ENCODE measurements at regions of chr4 and their contacts with region 1.

Region 1: DNA sequence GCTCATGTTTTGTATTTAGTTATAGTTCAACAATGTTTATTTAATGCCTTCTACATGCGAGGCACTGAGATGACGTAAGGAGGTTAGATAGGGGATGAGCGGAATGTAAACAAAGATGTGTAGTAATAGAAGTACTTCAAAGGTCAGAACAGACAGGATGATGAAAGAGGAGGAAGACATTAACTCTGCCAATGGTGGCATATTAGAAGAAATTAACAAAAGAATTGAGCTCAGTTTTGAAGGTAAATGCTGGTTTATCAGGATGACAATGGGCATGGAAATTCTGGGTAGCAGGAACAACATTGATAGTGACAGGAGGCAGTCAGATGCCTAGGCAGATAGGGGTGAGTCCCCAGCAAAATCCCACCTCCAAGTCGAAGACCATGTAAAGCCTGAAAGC is 62.3 kb upstream of the PGRMC2 start:
- DNase-seq: peak; percentile 91
- H3K4me3 ChIP-seq: no peak overlapping the region
- H3K27ac ChIP-seq: peak overlapping the region; percentile 40
- H3K27me3 ChIP-seq: no peaks in the 10 kb centered on the region
- CTCF ChIP-seq: no peak

Region 2: DNA sequence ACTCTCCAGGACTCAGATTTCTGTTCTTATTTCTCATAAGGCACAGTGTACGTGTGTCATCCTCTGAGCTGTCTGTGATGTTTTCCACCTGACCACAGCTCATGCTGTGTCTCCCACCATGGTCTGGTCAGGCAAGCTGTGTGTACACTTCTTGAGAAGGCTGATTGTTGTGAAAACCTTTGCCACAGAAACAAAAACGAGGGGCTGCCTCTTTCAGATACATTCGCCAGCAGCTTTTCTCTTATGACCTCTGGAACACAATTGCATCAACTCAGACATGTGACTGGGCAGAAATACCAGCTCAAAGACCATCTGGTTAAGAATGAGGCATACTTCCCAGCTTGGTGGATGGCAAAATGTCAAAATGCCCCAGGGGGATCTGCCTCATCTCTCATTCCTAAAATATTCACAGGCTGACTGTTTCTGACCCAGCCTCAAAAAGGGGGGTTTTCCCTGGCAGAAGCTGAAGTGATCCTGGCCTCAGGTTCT is 108.5 kb before region 1 on chr4:
- CTCF ChIA-PET with region 1: no interaction called
- POLR2A ChIA-PET with region 1: interaction called, 11 read pairs
- DNase-seq: peak; percentile 98
- H3K4me3 ChIP-seq: no peak overlapping the region
- H3K27ac ChIP-seq: peak overlapping the region; percentile 95
- H3K27me3 ChIP-seq: no peaks in the 10 kb centered on the region
- CTCF ChIP-seq: no peak

Region 3: DNA sequence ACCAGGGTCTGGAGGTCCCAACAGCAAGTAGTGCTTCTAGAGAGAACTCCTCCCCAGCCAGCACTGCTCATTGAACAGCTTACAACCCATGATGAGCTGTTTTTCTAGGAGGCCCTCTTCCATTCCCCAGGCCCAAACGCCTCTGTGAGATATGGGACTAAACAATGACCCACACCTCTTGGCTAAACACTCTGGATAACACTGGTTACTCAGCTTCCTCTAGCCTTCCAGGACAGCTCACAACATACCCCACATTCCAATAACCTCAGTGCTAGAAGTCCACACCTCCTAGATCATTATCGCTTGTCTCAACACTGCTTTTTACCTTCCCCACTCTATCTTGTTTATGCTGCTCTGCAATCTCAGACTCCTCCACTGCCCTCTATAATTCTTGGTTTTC is 26.9 kb before region 1 on chr4:
- CTCF ChIA-PET with region 1: no interaction called
- POLR2A ChIA-PET with region 1: interaction called, 10 read pairs
- DNase-seq: no peak
- H3K4me3 ChIP-seq: no peak overlapping the region
- H3K27ac ChIP-seq: peak overlapping the region; percentile 82
- H3K27me3 ChIP-seq: no peaks in the 10 kb centered on the region
- CTCF ChIP-seq: no peak

Region 4: DNA sequence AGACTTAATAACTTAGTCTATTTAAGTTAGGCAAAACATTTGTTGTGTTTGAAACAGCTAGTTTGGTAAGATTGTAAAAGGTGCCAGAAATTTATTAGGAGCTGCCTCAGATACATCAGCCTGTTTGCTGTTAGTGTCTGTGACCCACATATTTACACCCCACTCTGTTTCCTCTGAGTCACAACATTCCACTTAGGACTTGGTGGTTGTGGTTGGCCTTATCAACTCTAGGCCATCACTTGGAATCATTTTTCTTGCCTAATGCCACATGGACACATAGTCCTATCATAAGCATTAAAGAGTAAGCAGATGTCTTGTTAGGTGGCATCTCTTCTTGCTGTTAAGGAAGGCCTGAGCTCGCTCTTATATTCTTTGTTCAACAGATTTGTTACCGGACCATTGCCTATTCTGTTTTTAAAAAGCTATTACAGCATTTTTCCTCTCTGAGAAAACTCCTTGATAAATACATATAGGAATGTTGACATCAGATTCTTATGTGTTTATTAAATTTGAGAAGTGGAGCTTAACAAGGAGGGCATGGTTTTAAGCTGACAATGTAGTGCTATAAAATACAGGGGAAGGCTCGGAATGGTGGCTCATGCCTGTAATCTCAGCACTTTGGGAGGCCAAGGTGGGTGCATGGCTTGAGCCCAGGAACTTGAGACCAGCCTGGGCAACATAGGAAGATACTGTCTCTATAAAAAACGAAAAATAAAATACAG is 11.1 kb before region 1 on chr4:
- CTCF ChIA-PET with region 1: no interaction called
- POLR2A ChIA-PET with region 1: interaction called, 12 read pairs
- DNase-seq: peak; percentile 53
- H3K4me3 ChIP-seq: no peak overlapping the region
- H3K27ac ChIP-seq: peak overlapping the region; percentile 47
- H3K27me3 ChIP-seq: no peaks in the 10 kb centered on the region
- CTCF ChIP-seq: no peak

Measured in AG04450 (cell line).